Astrocyte of the cerebellum (primary cell): ENCODE measurements at regions of chr20 and their contacts with region 1.

Region 1: GRCh38 chr20:63846128-63846798 is 15.0 kb upstream of the ABHD16B start:
- DNase-seq: no peak
- H3K4me3 ChIP-seq: peak overlapping the region; percentile 10
- CTCF ChIP-seq: no peak

Region 2: DNA sequence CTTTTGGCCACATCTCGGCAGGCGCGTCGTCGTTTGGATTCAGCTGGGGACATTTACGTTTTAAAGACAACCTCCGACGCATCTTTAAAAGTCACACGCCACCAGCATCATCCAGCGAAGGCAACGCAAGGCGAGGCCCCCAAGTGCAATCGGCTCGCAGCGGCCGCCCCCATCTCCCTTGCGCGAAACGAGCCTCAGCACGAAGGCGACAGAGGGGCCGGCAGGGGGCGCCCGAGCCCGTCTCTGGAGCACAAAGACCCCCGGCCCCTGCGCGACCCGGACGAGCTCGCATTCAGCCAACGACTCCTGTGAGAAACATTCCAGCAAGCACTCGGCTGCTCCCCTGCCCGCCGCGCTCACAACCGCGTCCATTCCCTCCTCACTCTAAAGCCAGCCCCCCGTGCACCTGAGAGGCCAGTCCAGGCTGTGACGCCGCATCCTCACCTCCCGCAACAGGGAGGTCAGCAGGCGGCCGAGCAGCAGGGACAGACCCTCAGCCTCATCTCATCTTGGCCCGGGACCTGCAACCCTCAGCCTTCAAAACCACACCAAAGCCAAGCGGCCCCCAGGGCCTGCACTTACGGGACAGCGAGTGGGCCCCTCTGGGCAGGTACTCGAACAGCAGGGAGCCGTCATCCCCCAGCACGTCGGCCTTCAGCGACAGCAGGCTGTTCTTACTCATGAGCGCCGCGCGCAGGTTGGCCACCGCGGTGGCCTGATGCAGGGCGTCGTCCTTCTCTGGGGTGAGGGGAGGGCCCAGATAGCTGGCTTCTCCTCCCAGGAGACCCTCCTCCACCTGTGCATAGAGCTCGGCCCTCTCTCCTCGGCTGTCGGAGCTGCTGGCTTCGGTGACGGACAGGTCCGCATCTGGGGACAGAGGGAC is 70.9 kb before region 1 on chr20:
- in situ Hi-C with region 1: loop called (anchors 10 kb)
- DNase-seq: peak; percentile 23
- H3K4me3 ChIP-seq: peak overlapping the region; percentile 23
- CTCF ChIP-seq: peak; percentile 79